ENCODE measurements at regions of chr14 and their contacts with region 1.

Region 1: GRCh38 chr14:35416108-35416750 is 11.7 kb upstream of the NFKBIA start:
- DNase-seq: no peak
- CTCF ChIP-seq: no peak

Region 2: GRCh38 chr14:35215110-35215876 is 200.9 kb before region 1 on chr14:
- CTCF ChIA-PET with region 1: interaction called, 39 read pairs
- POLR2A ChIA-PET with region 1: no interaction called
- DNase-seq: peak; percentile 35
- CTCF ChIP-seq: peak; percentile 58

Region 3: DNA sequence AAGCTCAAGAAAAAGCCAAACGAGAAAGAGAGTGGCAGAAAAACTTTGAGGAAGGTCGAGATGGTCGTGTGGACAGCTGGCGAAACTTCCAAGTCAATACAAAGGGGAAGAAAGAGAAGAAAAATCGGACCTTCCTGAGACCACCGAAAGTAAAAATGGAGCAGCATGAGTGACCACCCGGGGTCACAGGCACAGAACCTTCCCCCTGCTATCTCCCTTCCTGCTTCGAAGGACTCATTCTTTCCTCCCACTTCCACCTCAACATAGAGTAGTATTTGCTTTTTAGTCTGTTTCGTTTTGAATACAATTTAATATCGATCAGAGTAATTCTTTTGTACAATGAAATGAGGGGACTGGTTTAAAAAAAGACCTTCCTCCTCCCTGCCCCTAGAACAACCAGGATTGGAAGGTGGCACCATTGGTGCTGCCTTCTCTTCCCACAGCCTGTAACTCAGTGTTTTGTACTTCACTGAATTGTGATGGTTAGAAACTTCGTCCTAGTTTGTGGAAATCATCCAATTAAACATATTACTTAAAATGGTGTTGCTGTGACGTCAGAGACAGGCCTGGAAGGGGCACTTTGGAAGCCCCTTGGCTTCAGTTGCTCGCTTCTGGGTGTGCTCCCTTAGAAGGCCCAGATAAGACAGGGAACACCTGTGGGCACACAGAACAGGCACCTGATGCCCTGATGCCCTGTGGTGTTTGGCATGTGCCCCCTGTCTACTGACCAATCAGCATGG is 14.4 kb after region 1 on chr14:
- CTCF ChIA-PET with region 1: interaction called, 16 read pairs
- POLR2A ChIA-PET with region 1: no interaction called
- DNase-seq: no peak
- CTCF ChIP-seq: no peak

Region 4: DNA sequence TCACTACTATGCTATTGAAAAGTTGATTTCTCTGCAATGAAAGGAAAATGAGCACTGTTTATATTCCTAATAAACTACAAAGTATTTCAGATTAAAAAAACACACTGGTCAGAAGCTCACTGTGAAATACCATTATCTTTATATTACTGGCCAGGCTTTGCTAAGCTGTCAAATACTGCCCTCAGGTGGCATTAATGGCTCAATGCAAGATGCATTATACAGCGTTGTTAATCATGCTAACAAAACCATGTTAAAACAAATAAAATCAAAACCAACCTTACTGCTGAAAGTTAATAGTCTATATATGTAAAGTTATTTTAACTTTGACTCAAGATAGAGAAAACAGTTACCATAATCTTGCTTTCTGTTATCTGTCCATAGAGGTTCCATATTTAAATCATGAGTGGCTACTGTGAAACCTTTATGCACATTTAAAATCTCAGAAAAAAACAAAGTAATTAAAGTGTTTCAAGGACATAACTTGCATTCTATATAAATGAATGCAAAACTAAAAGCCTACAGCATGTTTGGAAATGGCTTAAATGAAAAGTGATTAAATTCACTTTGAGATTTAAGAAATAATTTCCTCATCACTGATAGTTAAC is 271.2 kb after region 1 on chr14:
- CTCF ChIA-PET with region 1: interaction called, 22 read pairs
- POLR2A ChIA-PET with region 1: no interaction called
- DNase-seq: peak; percentile 27
- CTCF ChIP-seq: peak; percentile 85